GM23248 (cell line): ENCODE measurements at regions of chr7 and their contacts with region 1.

Region 1: DNA sequence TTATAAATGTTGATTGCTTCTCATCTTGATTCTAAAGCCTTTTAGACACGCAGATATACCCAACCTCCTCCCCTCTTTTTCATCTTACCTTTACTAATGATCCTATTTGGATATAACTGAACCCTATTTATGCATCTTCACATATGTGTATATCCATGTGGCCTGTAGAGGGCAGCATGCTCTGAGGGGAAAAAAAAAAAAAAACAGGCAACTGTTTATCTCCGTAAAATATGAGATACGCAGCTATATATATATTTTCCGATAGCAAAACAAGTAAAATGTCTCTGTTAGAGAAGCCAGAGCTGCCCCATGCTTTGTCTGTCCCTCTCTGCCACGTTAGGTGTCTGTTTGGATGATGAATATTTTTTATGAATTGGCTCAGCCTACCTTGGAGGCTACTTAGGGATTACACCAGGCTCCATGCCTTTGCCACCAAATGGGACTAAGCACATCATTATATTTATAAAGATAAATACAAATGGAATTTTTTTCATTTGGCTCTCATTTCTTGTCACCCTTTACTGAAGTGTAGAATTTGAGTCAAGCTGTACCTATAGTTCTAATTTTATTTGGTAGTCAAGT is 174.8 kb upstream of the FZD1 start:
- DNase-seq: peak; percentile 71
- H3K4me3 ChIP-seq: peak overlapping the region; percentile 65
- H3K27ac ChIP-seq: no peak overlapping the region
- H3K4me1 ChIP-seq: no peaks in the 10 kb centered on the region; the same call in 1 of the 2 replicates
- H3K27me3 ChIP-seq: no peaks in the 10 kb centered on the region

Region 2: GRCh38 chr7:90061077-90061476 is 1028.4 kb before region 1 on chr7:
- in situ Hi-C with region 1: no loop called
- DNase-seq: no peak
- H3K4me3 ChIP-seq: no peak overlapping the region
- H3K27ac ChIP-seq: no peak overlapping the region
- H3K4me1 ChIP-seq: no peaks in the 10 kb centered on the region
- H3K27me3 ChIP-seq: no peaks in the 10 kb centered on the region

Region 3: DNA sequence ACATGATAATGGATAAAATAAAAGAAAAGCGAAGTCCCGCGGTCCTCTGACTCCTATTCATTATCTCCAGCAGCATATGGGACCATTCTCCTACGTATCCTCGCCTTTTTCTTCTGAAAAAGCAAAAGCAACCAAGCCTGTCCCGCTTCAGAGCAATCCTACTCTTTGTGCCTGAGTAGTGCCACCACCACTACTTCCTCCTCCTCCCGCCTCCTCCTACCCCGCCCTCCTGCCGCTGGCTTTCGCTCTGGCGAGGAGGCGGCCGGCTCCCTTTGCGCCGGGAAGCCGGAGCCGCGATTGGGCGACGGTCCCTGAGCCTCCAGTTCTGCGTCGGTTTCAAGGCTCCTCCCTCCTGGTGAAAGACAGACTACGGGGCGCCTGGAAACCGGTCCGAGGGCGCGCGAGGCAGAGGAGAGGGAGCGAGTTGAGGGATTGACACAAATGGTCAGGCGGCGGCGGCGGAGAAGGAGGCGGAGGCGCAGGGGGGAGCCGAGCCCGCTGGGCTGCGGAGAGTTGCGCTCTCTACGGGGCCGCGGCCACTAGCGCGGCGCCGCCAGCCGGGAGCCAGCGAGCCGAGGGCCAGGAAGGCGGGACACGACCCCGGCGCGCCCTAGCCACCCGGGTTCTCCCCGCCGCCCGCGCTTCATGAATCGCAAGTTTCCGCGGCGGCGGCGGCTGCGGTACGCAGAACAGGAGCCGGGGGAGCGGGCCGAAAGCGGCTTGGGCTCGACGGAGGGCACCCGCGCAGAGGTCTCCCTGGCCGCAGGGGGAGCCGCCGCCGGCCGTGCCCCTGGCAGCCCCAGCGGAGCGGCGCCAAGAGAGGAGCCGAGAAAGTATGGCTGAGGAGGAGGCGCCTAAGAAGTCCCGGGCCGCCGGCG is 174.8 kb after region 1 on chr7 and contains the start of gene FZD1:
- in situ Hi-C with region 1: loop called (anchors 10 kb)
- DNase-seq: peak; percentile 99
- H3K4me3 ChIP-seq: peak within 1 kb of the TSS; percentile 86
- H3K27ac ChIP-seq: peak within 1 kb of the TSS; percentile 83
- H3K4me1 ChIP-seq: peaks cover 21% of the 10 kb centered on the region; the same call in 1 of the 2 replicates
- H3K27me3 ChIP-seq: no peaks in the 10 kb centered on the region
- total RNA-seq, gene FZD1: 15.1 and 18.5 TPM in 2 replicates

Region 4: DNA sequence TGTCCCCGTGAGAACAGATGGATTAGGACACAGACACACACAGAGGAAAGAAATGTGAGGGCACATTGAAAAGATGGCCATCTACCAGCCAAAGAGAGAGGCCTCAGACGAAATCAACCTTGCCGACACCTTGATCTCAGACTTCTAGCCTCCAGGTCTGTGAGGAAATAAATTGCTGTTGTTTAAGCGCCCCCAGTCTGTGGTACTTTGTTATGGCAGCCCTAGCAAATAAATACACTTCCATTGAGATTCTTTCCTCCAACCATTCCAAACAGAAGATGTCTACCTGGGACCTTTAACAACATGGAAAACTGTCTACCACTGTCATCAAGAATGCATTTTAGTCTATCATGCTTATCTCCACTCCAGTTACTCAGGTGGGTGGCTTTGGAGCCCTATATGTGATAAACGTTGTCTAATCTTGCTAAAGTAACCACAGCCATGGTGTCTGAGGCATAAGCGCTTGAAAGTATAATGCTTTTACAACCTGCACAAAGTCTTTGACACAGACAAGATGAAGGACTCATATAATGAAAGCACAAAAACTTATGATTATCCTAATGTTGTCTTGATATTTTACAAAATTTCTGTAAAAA is 546.8 kb after region 1 on chr7:
- in situ Hi-C with region 1: loop called (anchors 25 kb)
- DNase-seq: peak; percentile 38
- H3K4me3 ChIP-seq: no peak overlapping the region
- H3K27ac ChIP-seq: no peak overlapping the region
- H3K4me1 ChIP-seq: no peaks in the 10 kb centered on the region
- H3K27me3 ChIP-seq: no peaks in the 10 kb centered on the region

Region 5: GRCh38 chr7:91784463-91784862 is 695.0 kb after region 1 on chr7:
- in situ Hi-C with region 1: loop called (anchors 10 kb)
- DNase-seq: peak; percentile 86
- H3K4me3 ChIP-seq: no peak overlapping the region
- H3K27ac ChIP-seq: no peak overlapping the region
- H3K4me1 ChIP-seq: peaks cover 4% of the 10 kb centered on the region; the same call in 1 of the 2 replicates
- H3K27me3 ChIP-seq: no peaks in the 10 kb centered on the region